CD8-positive, alpha-beta T cell (primary cell): ENCODE measurements at regions of chr21 and their contacts with region 1.

Region 1: GRCh38 chr21:42818328-42818749 is 61.0 kb downstream of the WDR4 start:
- DNase-seq: peak; percentile 32 to 83 (median 67)
- ATAC-seq: peak; percentile 91
- H3K4me3 ChIP-seq: no peak overlapping the region
- H3K4me3 Mint-ChIP-seq: no peak overlapping the region
- H3K27ac ChIP-seq: no peak overlapping the region
- H3K27ac Mint-ChIP-seq: peak overlapping the region; percentile 73
- H3K4me1 ChIP-seq: no peaks in the 10 kb centered on the region
- H3K4me1 Mint-ChIP-seq: peaks cover 3% of the 10 kb centered on the region
- H3K27me3 ChIP-seq: peaks cover 0 to 2% of the 10 kb centered on the region in 2 experiments
- H3K27me3 Mint-ChIP-seq: peaks cover 9% of the 10 kb centered on the region
- CTCF ChIP-seq: peak; percentile 98

Region 2: DNA sequence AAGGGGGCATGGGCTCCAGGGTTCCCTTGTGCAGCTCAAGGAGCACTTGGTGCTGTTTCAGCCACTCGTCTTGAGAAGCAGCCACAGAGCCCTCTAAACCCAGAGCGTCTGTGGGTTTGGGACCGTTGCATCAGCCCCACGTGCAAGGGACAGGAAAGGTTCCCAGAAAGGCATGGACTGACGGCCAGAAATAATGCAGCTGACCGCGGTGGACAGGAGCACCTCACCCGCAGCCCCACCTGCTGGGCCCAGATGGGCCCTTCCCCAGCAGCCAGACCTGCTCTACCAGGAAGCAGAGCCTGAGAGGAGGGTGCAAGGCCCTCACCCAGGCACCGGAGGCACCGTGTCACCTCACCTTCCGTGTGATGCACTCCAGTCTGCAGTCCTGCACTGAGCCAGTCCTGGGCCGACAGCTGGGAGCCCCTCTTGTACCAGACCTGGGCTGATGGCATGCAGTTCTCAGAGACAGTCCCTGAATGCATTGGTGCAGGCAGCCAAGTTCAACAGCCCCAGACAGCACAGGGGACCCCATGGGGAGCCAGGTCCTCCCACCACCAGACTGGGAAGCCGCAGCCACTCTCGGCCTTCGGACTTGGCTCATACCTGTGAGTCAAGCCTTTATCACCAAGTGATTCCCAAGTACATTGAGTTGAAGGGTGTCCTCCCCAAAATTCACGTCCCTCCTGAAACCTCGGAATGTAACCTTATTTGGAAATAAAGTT is 498.3 kb before region 1 on chr21:
- CTCF ChIA-PET with region 1: no interaction called
- POLR2A ChIA-PET with region 1: no interaction called
- intact Hi-C with region 1: loop called in 1 of 2 experiments (anchors 10 kb)
- DNase-seq: no peak
- ATAC-seq: no peak
- H3K4me3 ChIP-seq: no peak overlapping the region
- H3K4me3 Mint-ChIP-seq: no peak overlapping the region
- H3K27ac ChIP-seq: no peak overlapping the region
- H3K27ac Mint-ChIP-seq: no peak overlapping the region
- H3K4me1 ChIP-seq: peaks cover 5% of the 10 kb centered on the region
- H3K4me1 Mint-ChIP-seq: peaks cover 5% of the 10 kb centered on the region
- H3K27me3 ChIP-seq: no peaks in the 10 kb centered on the region
- H3K27me3 Mint-ChIP-seq: peaks cover 11% of the 10 kb centered on the region
- CTCF ChIP-seq: no peak

Region 3: GRCh38 chr21:42652527-42653230 is 165.7 kb before region 1 on chr21:
- CTCF ChIA-PET with region 1: interaction called, 40 read pairs
- POLR2A ChIA-PET with region 1: interaction called, 3 read pairs
- intact Hi-C with region 1: loop called (anchors 1 kb)
- DNase-seq: no peak
- ATAC-seq: no peak
- H3K4me3 ChIP-seq: peak overlapping the region in 1 of 2 experiments; percentile 7
- H3K4me3 Mint-ChIP-seq: peak overlapping the region; percentile 83
- H3K27ac ChIP-seq: no peak overlapping the region
- H3K27ac Mint-ChIP-seq: peak overlapping the region; percentile 64
- H3K4me1 ChIP-seq: peaks cover 24% of the 10 kb centered on the region
- H3K4me1 Mint-ChIP-seq: peaks cover 26% of the 10 kb centered on the region
- H3K27me3 ChIP-seq: peaks cover 0 to 5% of the 10 kb centered on the region in 2 experiments
- H3K27me3 Mint-ChIP-seq: no peaks in the 10 kb centered on the region
- CTCF ChIP-seq: no peak

Region 4: GRCh38 chr21:42746593-42747275 is 71.6 kb before region 1 on chr21:
- CTCF ChIA-PET with region 1: interaction called, 19 read pairs
- POLR2A ChIA-PET with region 1: no interaction called
- intact Hi-C with region 1: loop called in 1 of 2 experiments (anchors 10 kb)
- DNase-seq: peak; percentile 22 to 82 (median 64)
- ATAC-seq: peak; percentile 79
- H3K4me3 ChIP-seq: peak overlapping the region; percentile 12 to 27
- H3K4me3 Mint-ChIP-seq: peak overlapping the region; percentile 75
- H3K27ac ChIP-seq: peak overlapping the region; percentile 63 to 76
- H3K27ac Mint-ChIP-seq: peak overlapping the region; percentile 97
- H3K4me1 ChIP-seq: peaks cover 29% of the 10 kb centered on the region
- H3K4me1 Mint-ChIP-seq: peaks cover 33% of the 10 kb centered on the region
- H3K27me3 ChIP-seq: no peaks in the 10 kb centered on the region
- H3K27me3 Mint-ChIP-seq: no peaks in the 10 kb centered on the region
- CTCF ChIP-seq: no peak

Region 5: GRCh38 chr21:42833439-42833815 is 15.1 kb after region 1 on chr21:
- CTCF ChIA-PET with region 1: interaction called, 14 read pairs
- POLR2A ChIA-PET with region 1: no interaction called
- intact Hi-C with region 1: no loop called
- DNase-seq: peak in 7 of 9 experiments; percentile 31 to 70 (median 59)
- ATAC-seq: peak; percentile 75
- H3K4me3 ChIP-seq: peak overlapping the region in 1 of 2 experiments; percentile 22
- H3K4me3 Mint-ChIP-seq: peak overlapping the region; percentile 68
- H3K27ac ChIP-seq: no peak overlapping the region
- H3K27ac Mint-ChIP-seq: no peak overlapping the region
- H3K4me1 ChIP-seq: peaks cover 29% of the 10 kb centered on the region
- H3K4me1 Mint-ChIP-seq: peaks cover 34% of the 10 kb centered on the region
- H3K27me3 ChIP-seq: peaks cover 0 to 4% of the 10 kb centered on the region in 2 experiments
- H3K27me3 Mint-ChIP-seq: no peaks in the 10 kb centered on the region
- CTCF ChIP-seq: peak; percentile 38

Region 6: DNA sequence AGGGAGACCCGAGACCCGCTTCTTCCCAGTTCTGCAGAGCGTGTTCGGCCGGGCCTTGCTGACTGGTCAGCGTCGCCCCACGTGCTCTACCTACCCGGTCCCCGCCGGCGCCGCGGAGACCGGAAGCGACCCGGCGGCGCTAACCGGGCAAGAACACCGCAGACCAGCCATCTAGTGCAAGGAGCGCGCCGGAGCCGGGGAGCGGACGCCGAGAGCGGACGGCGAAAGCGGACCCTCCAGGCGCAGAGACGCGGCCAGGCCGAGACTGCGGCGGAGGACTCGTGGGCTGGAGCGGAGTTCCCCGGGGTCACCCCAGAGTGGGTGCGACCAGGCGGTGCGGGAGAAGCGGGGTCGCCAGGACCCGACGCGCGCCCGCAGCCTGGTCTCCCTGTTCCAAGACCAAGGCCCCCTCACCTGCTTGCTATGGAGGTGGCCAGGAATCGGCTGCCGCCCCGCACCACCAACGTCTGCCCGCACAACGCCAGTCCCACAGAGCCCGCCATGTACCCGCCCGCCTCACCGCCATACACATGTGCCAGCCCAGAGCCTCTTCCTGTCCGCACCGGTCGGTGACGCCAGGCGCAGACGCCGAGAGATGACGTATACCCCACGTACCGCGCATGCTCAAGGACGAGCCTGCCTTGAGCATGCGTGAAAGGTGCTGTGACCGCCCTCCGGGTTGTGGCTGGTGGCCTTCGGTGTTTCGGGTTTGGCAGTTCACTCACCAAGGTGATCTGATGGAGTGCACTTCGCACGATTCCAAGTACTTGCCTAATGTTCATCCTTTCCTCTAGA is 60.9 kb after region 1 on chr21 and contains the start of gene WDR4:
- CTCF ChIA-PET with region 1: no interaction called
- POLR2A ChIA-PET with region 1: no interaction called
- intact Hi-C with region 1: no loop called
- DNase-seq: peak; percentile 98 to 100 (median 99)
- ATAC-seq: peak; percentile 87
- H3K4me3 ChIP-seq: peak within 1 kb of the TSS; percentile 65 to 85
- H3K4me3 Mint-ChIP-seq: peak within 1 kb of the TSS; percentile 97
- H3K27ac ChIP-seq: peak within 1 kb of the TSS; percentile 76 to 87
- H3K27ac Mint-ChIP-seq: peak within 1 kb of the TSS; percentile 99
- H3K4me1 ChIP-seq: peaks cover 16% of the 10 kb centered on the region
- H3K4me1 Mint-ChIP-seq: peaks cover 30% of the 10 kb centered on the region
- H3K27me3 ChIP-seq: no peaks in the 10 kb centered on the region
- H3K27me3 Mint-ChIP-seq: no peaks in the 10 kb centered on the region
- CTCF ChIP-seq: no peak
- total RNA-seq, gene WDR4: 13.2 to 13.3 TPM

Region 7: DNA sequence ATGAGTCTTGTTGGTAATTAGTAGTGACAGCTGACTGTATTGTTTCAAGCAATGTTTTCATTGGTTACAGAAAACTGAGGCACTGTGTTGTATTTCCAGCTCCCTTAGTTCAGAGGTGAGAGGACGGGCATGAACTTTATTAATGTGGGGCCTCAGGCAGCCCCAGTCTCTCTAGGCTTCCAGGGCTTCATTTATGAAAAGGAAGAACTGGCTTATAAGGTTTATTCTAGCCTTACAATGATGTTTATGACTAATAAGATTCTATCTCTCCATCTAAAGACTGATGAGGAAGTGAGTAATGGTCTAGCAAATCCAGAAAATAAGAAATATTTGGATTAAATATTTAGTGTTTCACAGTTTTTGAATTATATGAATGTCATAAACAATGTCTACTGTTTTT is 215.8 kb after region 1 on chr21:
- CTCF ChIA-PET with region 1: no interaction called
- POLR2A ChIA-PET with region 1: no interaction called
- intact Hi-C with region 1: no loop called
- DNase-seq: no peak
- ATAC-seq: no peak
- H3K4me3 ChIP-seq: no peak overlapping the region
- H3K4me3 Mint-ChIP-seq: no peak overlapping the region
- H3K27ac ChIP-seq: no peak overlapping the region
- H3K27ac Mint-ChIP-seq: no peak overlapping the region
- H3K4me1 ChIP-seq: no peaks in the 10 kb centered on the region
- H3K4me1 Mint-ChIP-seq: no peaks in the 10 kb centered on the region
- H3K27me3 ChIP-seq: no peaks in the 10 kb centered on the region
- H3K27me3 Mint-ChIP-seq: no peaks in the 10 kb centered on the region
- CTCF ChIP-seq: no peak